ENCODE measurements at regions of chr2 and their contacts with region 1.

Region 1: DNA sequence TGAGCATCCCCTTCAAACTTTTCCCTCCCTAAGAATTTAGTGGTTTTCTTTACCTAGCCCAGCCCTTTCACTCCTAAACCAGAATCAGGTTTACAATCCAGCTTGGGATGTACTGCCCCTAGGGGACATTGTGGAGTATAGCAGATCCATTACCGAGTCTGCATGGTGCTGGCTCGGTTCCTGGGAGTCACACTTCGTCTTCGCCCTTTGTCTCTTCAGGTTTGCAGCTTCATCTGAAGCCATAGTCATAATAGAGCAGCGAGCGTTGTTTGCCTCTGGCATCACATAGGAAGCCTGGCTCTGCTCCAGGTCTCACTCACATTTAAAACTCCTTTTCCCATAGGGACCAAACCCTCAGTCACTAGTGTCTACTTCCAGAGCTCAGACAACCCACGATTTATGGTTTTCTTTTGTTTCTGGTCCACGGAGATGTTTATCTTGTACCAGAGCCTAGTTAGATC is 16.8 kb upstream of the LYPD6 start:
- DNase-seq: peak; percentile 69
- H3K4me3 ChIP-seq: no peak overlapping the region
- H3K27ac ChIP-seq: no peak overlapping the region
- H3K4me1 ChIP-seq: no peaks in the 10 kb centered on the region
- H3K27me3 ChIP-seq: 0 out of 2 replicates have a peak, but pooled peaks cover 1% of the 10 kb centered on the region

Region 2: DNA sequence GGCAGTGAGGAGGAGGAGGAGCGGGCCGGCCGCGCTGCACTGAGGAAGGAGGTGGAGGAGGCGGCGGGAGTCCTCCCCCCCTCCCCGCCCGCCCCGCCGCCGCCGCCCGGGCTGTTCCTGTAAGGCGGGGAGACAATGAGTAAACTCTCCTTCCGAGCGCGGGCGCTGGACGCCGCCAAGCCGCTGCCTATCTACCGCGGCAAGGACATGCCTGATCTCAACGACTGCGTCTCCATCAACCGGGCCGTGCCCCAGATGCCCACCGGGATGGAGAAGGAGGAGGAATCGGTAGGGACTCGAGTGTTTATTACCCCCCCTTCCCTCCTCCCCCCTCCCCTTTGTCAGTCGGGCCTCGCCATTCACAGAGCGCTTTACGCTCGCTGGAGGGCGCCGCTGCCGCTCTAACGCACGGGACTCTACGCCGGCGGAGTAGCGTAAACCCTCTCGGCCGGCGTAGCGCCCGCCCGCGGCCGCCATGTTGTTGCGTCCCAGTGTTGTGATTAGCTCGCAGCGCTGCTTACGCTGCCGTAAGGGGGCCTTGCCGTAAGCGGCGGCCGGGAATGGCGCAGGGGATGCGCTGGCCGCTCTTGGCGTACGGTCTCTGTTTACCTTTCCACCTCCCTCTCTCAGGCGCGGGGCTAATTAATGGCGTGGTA is 668.5 kb before region 1 on chr2:
- in situ Hi-C with region 1: loop called (anchors 25 kb)
- DNase-seq: peak; percentile 97
- H3K4me3 ChIP-seq: peak overlapping the region; percentile 90
- H3K27ac ChIP-seq: peak overlapping the region; percentile 90
- H3K4me1 ChIP-seq: 0 out of 2 replicates have a peak, but pooled peaks cover 5% of the 10 kb centered on the region
- H3K27me3 ChIP-seq: no peaks in the 10 kb centered on the region

Region 3: GRCh38 chr2:149038442-149039212 is 274.9 kb before region 1 on chr2 and contains the start of gene LYPD6B:
- in situ Hi-C with region 1: loop called (anchors 10 kb)
- DNase-seq: peak; percentile 38
- H3K4me3 ChIP-seq: peak within 1 kb of the TSS; percentile 59
- H3K27ac ChIP-seq: no peak within 1 kb of the TSS
- H3K4me1 ChIP-seq: 0 out of 2 replicates have a peak, but pooled peaks cover 3% of the 10 kb centered on the region
- H3K27me3 ChIP-seq: peaks cover 15% of the 10 kb centered on the region
- total RNA-seq, gene LYPD6B: 3.9 and 6.8 TPM in 2 replicates